ENCODE measurements at regions of chr20 and their contacts with region 1.

Region 1: GRCh38 chr20:44720617-44720993 is 5.4 kb downstream of the CCN5 start:
- DNase-seq: no peak
- H3K4me3 ChIP-seq: no peak overlapping the region
- CTCF ChIP-seq: no peak

Region 2: DNA sequence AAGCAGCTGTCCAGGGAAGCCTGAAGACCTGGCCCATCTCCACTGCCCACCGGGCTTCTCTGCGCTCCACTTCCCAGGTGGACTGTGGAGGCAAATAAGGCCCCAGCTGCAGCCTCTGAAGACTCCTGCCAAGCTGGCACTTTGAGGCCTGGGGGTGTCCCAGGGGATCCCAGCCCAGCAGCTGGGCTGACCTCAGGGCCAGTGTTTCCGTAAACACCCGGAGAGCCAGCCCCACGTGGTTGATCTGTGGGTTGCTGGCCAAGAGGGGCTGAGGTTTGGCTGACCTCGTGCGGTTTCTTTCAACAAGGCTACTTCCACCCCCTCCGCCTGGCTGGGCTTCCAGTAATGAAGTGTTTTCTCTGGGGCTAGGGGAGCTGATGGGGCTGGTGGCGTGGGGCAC is 17.8 kb before region 1 on chr20:
- CTCF ChIA-PET with region 1: interaction called, 801 read pairs
- POLR2A ChIA-PET with region 1: no interaction called
- DNase-seq: no peak
- H3K4me3 ChIP-seq: no peak overlapping the region
- CTCF ChIP-seq: no peak

Region 3: GRCh38 chr20:44733341-44734069 is 12.9 kb after region 1 on chr20:
- CTCF ChIA-PET with region 1: interaction called, 29 read pairs
- POLR2A ChIA-PET with region 1: interaction called, 6 read pairs
- DNase-seq: no peak
- H3K4me3 ChIP-seq: no peak overlapping the region
- CTCF ChIP-seq: peak; percentile 93

Region 4: GRCh38 chr20:44756011-44756688 is 35.5 kb after region 1 on chr20:
- CTCF ChIA-PET with region 1: no interaction called
- POLR2A ChIA-PET with region 1: no interaction called
- DNase-seq: no peak
- H3K4me3 ChIP-seq: no peak overlapping the region
- CTCF ChIP-seq: no peak

Region 5: GRCh38 chr20:44819936-44820335 is 99.3 kb after region 1 on chr20:
- CTCF ChIA-PET with region 1: no interaction called
- POLR2A ChIA-PET with region 1: no interaction called
- DNase-seq: no peak
- H3K4me3 ChIP-seq: no peak overlapping the region
- CTCF ChIP-seq: no peak

Region 6: DNA sequence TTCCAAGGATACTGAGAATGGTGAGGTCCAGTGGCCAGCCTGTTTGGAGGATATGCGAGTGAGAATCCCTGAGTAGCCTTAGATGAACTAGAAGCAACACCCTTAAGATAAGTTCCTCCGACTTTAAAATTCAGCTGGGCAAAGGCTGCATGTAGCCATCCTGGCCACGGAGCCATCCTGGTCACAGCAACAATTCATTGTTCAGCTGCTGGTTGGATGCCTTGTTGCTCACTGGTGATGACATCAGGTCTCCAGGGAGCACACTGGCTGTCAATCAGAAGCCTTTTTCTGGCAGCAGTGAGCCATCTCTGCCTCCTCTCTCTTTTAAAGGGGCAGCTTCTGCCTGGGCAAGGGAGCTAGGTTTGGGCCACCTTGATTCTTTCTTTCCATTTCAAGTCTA is 112.1 kb after region 1 on chr20:
- CTCF ChIA-PET with region 1: no interaction called
- POLR2A ChIA-PET with region 1: no interaction called
- DNase-seq: no peak
- H3K4me3 ChIP-seq: no peak overlapping the region
- CTCF ChIP-seq: no peak